Endothelial cell of umbilical vein (primary cell): ENCODE measurements at regions of chr7 and their contacts with region 1.

Region 1: GRCh38 chr7:24812310-24812945 is 55.2 kb upstream of the GSDME start:
- DNase-seq: peak; percentile 54
- H3K4me3 ChIP-seq: no peak overlapping the region
- H3K27ac ChIP-seq: no peak overlapping the region
- H3K4me1 ChIP-seq: no peaks in the 10 kb centered on the region
- H3K27me3 ChIP-seq: no peaks in the 10 kb centered on the region
- CTCF ChIP-seq: peak; percentile 85 to 86
- POLR2A ChIP-seq: no peak

Region 2: DNA sequence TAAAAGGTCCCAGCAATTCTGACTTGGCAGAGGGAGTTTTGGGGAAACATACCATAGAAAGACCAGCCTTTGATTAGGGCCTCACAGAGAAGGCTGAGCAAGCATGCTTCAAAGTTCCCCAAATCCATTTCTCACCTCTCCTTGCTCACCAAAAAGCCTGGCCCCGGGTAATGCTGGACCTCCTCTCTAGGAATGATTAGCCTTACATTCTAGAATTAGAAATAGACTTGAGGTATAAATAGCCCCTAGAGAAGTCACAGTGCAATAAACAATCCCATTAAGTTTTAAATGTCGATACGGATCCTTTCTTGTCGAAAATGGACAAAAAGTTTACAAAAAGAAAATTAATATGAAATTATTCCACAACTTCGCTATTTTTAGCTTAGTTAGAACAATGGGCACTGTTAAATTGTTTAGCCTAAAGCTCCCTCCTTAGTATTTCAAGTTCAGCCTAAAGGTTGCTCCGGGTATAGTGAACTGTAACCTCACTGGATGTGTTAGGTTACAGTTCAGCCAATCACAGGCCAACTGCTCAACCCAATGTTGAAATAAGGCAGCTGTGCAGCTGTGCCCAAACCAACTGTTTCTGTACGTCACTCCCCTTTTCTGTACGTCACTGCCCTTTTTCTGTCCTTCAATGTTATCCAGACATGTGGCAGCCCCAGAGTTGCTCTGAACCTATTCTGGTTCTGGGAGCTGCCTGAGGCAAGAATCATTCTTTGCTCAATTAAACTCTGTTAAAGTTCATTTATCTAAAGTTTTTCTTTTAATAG is 47.3 kb before region 1 on chr7:
- CTCF ChIA-PET with region 1: interaction called, 10 read pairs
- POLR2A ChIA-PET with region 1: no interaction called
- dilution Hi-C with region 1: no loop called
- intact Hi-C with region 1: no loop called
- DNase-seq: no peak
- H3K4me3 ChIP-seq: no peak overlapping the region
- H3K27ac ChIP-seq: no peak overlapping the region
- H3K4me1 ChIP-seq: no peaks in the 10 kb centered on the region
- H3K27me3 ChIP-seq: peaks cover 14 to 17% of the 10 kb centered on the region in 2 experiments
- CTCF ChIP-seq: no peak
- POLR2A ChIP-seq: no peak

Region 3: GRCh38 chr7:24825931-24826661 is 13.7 kb after region 1 on chr7:
- CTCF ChIA-PET with region 1: interaction called, 28 read pairs
- POLR2A ChIA-PET with region 1: no interaction called
- dilution Hi-C with region 1: no loop called
- intact Hi-C with region 1: no loop called
- DNase-seq: peak; percentile 12
- H3K4me3 ChIP-seq: no peak overlapping the region
- H3K27ac ChIP-seq: no peak overlapping the region
- H3K4me1 ChIP-seq: peaks cover 24% of the 10 kb centered on the region
- H3K27me3 ChIP-seq: no peaks in the 10 kb centered on the region
- CTCF ChIP-seq: no peak
- POLR2A ChIP-seq: no peak

Region 4: DNA sequence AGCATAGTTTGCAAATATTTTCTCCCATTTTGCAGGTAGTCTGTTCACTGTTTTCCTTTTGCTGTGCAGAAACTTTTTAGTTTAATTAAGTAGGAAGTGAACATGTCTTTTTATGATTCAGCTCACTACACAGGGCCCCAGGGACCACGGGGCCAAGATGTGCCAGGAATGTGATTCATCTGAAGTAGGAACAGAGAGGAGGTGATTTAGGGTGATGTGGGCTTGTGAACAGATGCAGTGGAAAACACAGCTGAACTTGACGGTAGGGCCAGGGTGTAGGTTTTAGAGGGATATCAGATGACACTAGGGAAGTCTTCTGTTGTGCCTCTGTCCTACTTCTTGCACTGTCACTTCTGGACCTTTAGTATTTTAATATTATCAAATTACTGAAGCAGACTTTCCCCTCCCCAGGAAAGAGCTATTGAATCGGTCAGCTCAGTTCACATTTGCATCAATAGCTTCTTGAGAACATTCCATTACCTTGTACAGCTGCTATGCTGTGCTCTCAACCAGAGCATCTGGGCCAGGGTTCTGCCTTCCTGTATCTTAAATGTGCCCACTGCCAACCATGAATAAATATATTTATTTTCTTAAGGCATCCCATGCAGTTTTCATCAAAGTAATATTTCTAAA is 70.7 kb after region 1 on chr7:
- CTCF ChIA-PET with region 1: interaction called, 15 read pairs
- POLR2A ChIA-PET with region 1: interaction called, 5 read pairs
- dilution Hi-C with region 1: no loop called
- intact Hi-C with region 1: no loop called
- DNase-seq: peak; percentile 67
- H3K4me3 ChIP-seq: no peak overlapping the region
- H3K27ac ChIP-seq: peak overlapping the region; percentile 23
- H3K4me1 ChIP-seq: peaks cover 47% of the 10 kb centered on the region
- H3K27me3 ChIP-seq: no peaks in the 10 kb centered on the region
- CTCF ChIP-seq: no peak
- POLR2A ChIP-seq: no peak

Region 5: GRCh38 chr7:25060487-25061055 is 248.1 kb after region 1 on chr7:
- CTCF ChIA-PET with region 1: interaction called, 42 read pairs
- POLR2A ChIA-PET with region 1: no interaction called
- dilution Hi-C with region 1: no loop called
- intact Hi-C with region 1: no loop called
- DNase-seq: no peak
- H3K4me3 ChIP-seq: no peak overlapping the region
- H3K27ac ChIP-seq: no peak overlapping the region
- H3K4me1 ChIP-seq: no peaks in the 10 kb centered on the region
- H3K27me3 ChIP-seq: peaks cover 0 to 1% of the 10 kb centered on the region in 2 experiments
- CTCF ChIP-seq: no peak
- POLR2A ChIP-seq: no peak

Region 6: GRCh38 chr7:25075459-25075858 is 263.0 kb after region 1 on chr7:
- CTCF ChIA-PET with region 1: interaction called, 129 read pairs
- POLR2A ChIA-PET with region 1: no interaction called
- dilution Hi-C with region 1: no loop called
- intact Hi-C with region 1: loop called (anchors 1 kb)
- DNase-seq: no peak
- H3K4me3 ChIP-seq: no peak overlapping the region
- H3K27ac ChIP-seq: no peak overlapping the region
- H3K4me1 ChIP-seq: no peaks in the 10 kb centered on the region
- H3K27me3 ChIP-seq: peaks cover 0 to 2% of the 10 kb centered on the region in 2 experiments
- CTCF ChIP-seq: no peak
- POLR2A ChIP-seq: no peak

Region 7: DNA sequence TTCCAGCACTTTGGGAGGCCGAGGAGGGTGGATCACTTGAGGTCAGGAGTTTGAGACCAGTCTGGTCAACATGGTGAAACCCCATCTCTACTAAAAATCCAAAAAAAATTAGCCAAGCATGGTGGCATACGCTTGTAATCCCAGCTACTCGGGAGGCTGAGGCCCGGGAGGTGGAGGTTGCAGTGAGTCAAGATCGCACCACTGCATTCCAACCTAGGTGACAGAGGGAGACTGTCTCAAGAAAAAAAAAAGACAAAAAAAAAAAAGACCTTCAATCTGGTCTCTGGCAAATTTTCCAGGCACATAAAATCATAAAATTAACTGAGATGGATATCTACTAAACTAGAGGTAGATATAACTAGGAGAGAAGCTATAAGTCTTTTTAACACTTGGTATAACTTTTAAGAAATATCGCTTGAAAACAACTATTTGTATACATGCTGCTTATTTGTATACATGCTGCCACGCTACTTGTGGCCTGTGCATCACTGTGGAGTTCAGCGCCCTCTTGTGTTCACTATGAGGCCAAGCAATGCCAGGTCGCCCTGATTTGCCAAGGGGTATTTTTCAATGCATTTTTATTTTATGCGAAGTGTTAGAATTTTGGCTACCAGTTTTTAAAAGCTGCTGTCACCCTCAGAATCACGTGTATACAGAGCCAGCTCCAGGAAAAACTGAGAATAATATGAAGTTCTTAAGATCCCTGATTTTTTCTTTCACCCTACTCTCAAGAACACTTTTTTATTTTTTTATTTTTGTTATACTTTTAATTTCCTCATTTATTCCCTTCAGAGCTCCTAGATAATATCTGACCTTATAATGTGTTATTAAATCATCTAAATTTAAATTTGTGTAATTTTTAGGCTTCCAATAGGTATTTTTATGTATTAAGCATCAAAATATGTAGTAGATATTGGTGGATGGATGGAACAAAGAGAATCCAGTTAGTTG is 285.9 kb after region 1 on chr7:
- CTCF ChIA-PET with region 1: interaction called, 268 read pairs
- POLR2A ChIA-PET with region 1: no interaction called
- dilution Hi-C with region 1: no loop called
- intact Hi-C with region 1: loop called (anchors 1 kb)
- DNase-seq: peak; percentile 73
- H3K4me3 ChIP-seq: no peak overlapping the region
- H3K27ac ChIP-seq: no peak overlapping the region
- H3K4me1 ChIP-seq: peaks cover 2% of the 10 kb centered on the region
- H3K27me3 ChIP-seq: peaks cover 0 to 1% of the 10 kb centered on the region in 2 experiments
- CTCF ChIP-seq: peak; percentile 79 to 93
- POLR2A ChIP-seq: no peak

Region 8: GRCh38 chr7:25158966-25159365 is 346.5 kb after region 1 on chr7:
- CTCF ChIA-PET with region 1: no interaction called
- POLR2A ChIA-PET with region 1: no interaction called
- dilution Hi-C with region 1: no loop called
- intact Hi-C with region 1: no loop called
- DNase-seq: no peak
- H3K4me3 ChIP-seq: no peak overlapping the region
- H3K27ac ChIP-seq: no peak overlapping the region
- H3K4me1 ChIP-seq: no peaks in the 10 kb centered on the region
- H3K27me3 ChIP-seq: no peaks in the 10 kb centered on the region
- CTCF ChIP-seq: no peak
- POLR2A ChIP-seq: no peak